Body of pancreas (tissue), 4 donors: ENCODE measurements at regions of chrX and their contacts with region 1.

Region 1: DNA sequence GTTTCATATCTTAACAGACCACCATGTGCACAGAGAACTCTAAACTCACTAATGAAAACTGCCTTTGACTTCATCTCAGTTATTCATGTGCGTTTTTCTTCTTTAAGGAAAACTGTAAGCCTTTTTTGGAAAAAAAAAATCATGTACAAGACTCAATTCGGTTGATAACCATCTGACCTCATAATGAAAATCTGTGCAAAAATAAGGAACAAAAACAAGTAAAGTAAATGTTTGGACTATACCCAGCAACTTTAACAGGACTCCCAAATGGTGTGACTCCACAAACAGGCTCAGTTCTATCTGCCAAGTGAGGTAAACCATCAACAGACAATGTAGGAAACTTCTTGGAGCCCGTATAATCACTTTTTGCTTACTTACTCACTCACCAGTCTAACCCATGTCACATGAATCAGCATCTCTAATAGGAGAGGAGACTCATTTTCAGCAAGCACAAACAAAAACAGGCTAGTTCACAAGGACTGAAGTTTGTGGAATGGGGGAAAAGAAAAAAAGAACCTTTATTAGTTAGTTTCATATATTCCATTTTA is 9.3 kb downstream of the APOO start:
- DNase-seq: no peak
- ATAC-seq: no peak
- H3K4me3 ChIP-seq: no peak overlapping the region
- H3K27ac ChIP-seq: peak overlapping the region in 1 of 4 donors; percentile 0
- H3K4me1 ChIP-seq: peaks cover 7% of the 10 kb centered on the region
- H3K27me3 ChIP-seq: no peaks in the 10 kb centered on the region
- CTCF ChIP-seq: no peak
- POLR2A ChIP-seq: no peak

Region 2: DNA sequence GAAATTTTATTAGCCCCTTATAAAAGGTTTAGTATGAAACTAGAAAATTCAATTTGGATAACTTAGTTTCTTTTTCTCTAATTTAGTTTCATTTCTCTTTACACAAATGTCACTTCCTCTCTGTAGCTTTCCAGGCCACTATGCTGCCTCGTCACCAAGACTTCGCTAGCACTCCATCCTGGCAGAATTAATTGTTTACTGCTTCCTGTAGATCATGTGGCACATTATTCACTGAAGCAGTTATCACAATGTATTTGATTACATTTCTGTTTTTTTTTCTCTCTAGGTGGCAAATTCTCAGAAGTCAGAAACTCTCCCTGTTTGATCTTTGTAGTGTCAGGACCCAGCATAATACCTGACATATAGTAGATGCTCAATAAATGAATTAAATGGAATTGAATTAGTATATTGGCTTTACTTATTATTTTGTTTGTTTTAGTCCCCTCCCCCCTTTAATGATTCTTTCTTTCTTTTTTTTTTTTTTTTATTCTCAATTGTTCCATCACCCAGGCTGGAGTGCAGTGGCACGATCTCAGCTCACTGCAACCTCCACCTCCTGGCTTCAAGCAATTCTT is 124.8 kb before region 1 on chrX:
- intact Hi-C with region 1: loop called (anchors 10 kb)
- DNase-seq: peak in 1 of 4 donors; percentile 33
- ATAC-seq: peak; percentile 50
- H3K4me3 ChIP-seq: no peak overlapping the region
- H3K27ac ChIP-seq: peak overlapping the region in 1 of 4 donors; percentile 62
- H3K4me1 ChIP-seq: no peaks in the 10 kb centered on the region
- H3K27me3 ChIP-seq: no peaks in the 10 kb centered on the region
- CTCF ChIP-seq: no peak
- POLR2A ChIP-seq: no peak